ENCODE measurements at regions of chr22 and their contacts with region 1.

Region 1: GRCh38 chr22:25777870-25778269 is 35.9 kb downstream of the MYO18B start:
- DNase-seq: no peak
- ATAC-seq: peak in 1 of 2 donors; percentile 51

Region 2: GRCh38 chr22:25465949-25466348 is 311.9 kb before region 1 on chr22:
- intact Hi-C with region 1: loop called in 1 of 2 experiments (anchors 5 kb)
- DNase-seq: no peak
- ATAC-seq: no peak

Region 3: DNA sequence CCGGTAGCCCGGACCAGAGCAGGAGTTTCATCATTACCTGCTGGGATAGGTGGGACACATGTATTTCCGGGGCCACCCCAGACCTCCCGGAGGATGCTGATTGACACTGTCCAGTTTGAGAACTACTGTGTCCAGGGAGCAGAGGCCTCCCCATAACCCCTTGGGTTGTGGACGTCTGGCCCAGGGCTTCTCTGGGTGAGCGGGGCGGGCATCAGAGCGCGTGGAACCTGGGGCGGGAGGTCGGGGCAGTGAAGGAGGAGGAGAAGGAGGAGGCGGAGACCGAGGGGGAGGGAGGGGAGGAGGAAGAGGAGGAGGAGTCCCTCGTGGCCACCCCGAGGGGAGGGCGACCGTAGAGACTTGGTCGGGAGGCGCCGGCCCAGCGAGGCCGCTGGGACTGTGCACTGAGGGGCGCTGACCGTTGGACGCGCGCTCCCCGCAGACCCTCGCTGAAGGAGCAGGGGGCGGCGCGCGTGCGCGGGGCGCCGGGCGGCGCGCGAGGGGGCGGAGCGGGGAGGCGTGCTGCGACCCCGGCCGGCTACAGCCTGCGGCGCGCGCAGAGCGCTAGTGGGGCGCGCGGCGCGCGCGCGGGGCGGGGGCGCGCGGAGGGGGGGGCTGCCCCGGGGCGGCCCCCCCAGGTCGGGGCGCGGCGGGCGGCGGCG is 213.4 kb before region 1 on chr22 and contains the start of gene GRK3:
- intact Hi-C with region 1: loop called in 1 of 2 experiments (anchors 10 kb)
- DNase-seq: peak; percentile 78
- ATAC-seq: peak; percentile 81 to 92
- total RNA-seq, gene GRK3: 12.2 to 20.5 TPM

Measured in left cardiac atrium (tissue), 4 donors.